KBM-7 (cell line): ENCODE measurements at regions of chr11 and their contacts with region 1.

Region 1: GRCh38 chr11:47616726-47617416 is 22.7 kb upstream of the C1QTNF4 start:
- DNase-seq: peak; percentile 85

Region 2: DNA sequence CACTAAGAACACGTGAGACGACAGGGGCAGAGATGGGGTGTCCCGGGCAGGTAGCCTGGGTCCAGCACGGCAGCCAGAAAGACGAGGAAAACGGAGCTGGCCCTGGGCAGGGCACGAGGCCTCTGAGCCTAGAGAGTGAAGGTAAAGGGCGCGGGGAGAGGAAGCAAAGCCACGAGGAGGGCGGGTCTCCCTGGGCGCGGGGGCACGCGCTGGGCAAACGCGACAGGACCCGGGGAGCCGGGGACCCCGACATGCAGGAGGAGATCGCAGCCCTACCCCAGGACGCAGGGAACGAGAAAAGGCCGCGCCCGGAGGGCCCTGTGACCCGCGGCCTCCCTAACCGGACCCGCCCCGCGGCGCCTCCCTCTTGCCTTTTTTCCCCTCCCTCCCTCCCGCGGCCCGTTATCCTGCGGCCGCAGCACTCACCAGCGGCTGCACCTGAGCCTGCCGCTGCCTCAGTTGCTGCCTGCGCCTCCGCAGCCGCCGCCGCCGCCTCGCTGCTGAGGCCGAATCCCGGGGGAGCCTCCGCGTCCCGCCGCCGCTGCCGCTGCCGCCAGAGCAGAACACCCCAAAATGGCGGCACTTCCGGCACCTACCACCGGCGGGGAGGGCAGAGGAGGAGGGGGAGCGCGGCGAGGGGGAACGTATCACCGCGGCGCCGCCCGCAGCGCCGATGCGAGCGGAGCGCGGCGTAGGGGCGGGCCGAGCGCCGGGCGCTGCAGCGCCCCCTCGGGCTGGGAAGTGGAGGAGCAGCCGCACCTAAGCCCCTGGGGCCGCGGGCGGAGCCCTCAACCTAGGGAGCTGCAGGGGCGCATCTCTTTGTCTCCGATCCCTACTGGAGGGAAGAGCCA is 64.1 kb before region 1 on chr11 and contains the start of gene CELF1:
- in situ Hi-C with region 1: loop called (anchors 10 kb)
- DNase-seq: peak; percentile 91

Region 3: GRCh38 chr11:47731475-47731874 is 114.6 kb after region 1 on chr11:
- in situ Hi-C with region 1: no loop called
- DNase-seq: no peak

Region 4: DNA sequence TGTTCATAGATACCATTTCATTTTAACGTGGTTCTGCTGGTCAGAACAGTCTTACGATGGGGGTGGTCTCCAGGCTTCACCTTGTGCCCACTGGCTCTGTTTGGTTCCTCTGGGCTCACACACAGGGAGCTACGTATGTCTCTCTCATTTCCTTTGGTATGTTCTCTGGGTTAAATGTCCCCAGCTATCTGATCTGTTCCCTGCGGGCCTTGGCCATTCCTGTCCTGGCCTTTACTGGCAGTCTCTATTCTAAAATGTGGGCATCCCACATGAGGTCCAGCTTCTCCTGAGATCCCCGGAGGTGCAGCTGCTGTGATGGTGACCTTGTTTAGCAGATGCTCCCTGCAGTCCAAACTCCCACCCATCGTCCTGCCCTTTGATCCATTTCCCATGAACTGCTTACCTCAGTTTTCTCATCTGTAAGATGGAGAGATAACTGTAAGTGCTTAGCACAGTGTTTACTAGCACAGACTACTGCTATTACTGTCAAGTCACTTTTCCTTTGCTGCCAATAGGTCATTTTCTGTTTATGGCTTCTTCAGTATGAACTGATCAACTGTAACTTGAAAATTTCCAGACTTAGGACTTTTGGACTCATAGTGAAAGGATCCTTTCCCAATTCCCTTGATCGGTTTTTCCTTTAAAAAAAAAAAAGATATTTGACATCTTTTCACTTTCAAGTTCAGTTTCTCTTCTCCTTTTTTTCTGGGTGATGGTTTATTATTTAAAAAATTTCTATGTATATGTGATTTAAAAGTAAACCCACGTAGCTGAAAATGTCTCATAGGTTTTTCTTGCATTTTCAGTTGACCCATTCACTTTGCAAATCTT is 456.4 kb after region 1 on chr11:
- in situ Hi-C with region 1: no loop called
- DNase-seq: no peak